PC-9 (cell line): ENCODE measurements at regions of chr16 and their contacts with region 1.

Region 1: GRCh38 chr16:2720719-2721633 is 952 bp upstream of the PRSS27 start:
- DNase-seq: peak; percentile 71 to 94
- H3K4me3 ChIP-seq: peak overlapping the region; percentile 64
- H3K27ac ChIP-seq: peak overlapping the region; percentile 72
- H3K4me1 ChIP-seq: peaks cover 34% of the 10 kb centered on the region
- H3K27me3 ChIP-seq: no peaks in the 10 kb centered on the region
- CTCF ChIP-seq: peak; percentile 34; the same call in 1 of the 2 replicates

Region 2: GRCh38 chr16:2673066-2673999 is 47.6 kb before region 1 on chr16:
- CTCF ChIA-PET with region 1: no interaction called
- POLR2A ChIA-PET with region 1: no interaction called
- intact Hi-C with region 1: loop called (anchors 2 kb)
- DNase-seq: peak; percentile 92 to 100
- H3K4me3 ChIP-seq: peak overlapping the region; percentile 72
- H3K27ac ChIP-seq: peak overlapping the region; percentile 46
- H3K4me1 ChIP-seq: peaks cover 19% of the 10 kb centered on the region
- H3K27me3 ChIP-seq: no peaks in the 10 kb centered on the region
- CTCF ChIP-seq: no peak

Region 3: GRCh38 chr16:2752035-2752849 is 31.3 kb after region 1 on chr16 and contains the start of gene SRRM2:
- CTCF ChIA-PET with region 1: no interaction called
- POLR2A ChIA-PET with region 1: no interaction called
- intact Hi-C with region 1: loop called (anchors 1 kb)
- DNase-seq: peak; percentile 86 to 95
- H3K4me3 ChIP-seq: peak within 1 kb of the TSS; percentile 90
- H3K27ac ChIP-seq: peak within 1 kb of the TSS; percentile 96
- H3K4me1 ChIP-seq: peaks cover 26% of the 10 kb centered on the region
- H3K27me3 ChIP-seq: no peaks in the 10 kb centered on the region
- CTCF ChIP-seq: no peak
- total RNA-seq, gene SRRM2: 679 and 746 TPM in 2 replicates

Region 4: DNA sequence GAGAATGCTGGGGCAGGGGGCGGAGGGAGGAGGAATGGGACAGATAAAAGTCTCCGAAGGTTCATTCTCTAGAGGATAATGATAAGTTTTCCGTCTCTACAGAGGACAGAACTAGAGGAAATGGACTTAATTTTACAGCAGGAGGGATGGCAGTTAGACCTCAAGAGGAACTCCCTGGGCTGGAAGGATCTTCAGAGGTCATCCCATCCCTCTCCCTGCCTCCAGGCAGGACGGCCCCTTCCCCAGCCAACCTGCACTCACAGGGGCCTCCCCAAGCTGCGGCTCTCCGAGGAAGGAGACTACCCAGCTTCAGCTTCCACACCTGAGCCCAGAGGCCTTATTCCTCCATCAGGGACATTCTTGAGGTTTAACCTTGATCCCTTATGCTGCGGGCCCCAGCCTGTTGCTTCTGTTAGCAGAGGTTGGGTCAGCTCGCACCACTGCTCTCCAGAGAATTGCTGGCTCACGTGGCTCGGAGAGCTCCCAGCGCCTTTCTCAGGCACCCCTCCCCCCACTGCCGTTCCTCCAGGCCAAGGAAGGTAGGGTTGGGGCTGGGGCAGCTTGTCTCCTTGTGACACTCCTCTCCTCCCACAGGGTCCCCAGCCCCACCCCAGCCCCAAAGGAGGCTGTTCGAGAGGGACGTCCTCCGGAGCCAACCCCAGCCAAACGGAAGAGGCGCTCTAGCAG is 47.6 kb after region 1 on chr16:
- CTCF ChIA-PET with region 1: no interaction called
- POLR2A ChIA-PET with region 1: no interaction called
- intact Hi-C with region 1: no loop called
- DNase-seq: no peak
- H3K4me3 ChIP-seq: no peak overlapping the region
- H3K27ac ChIP-seq: no peak overlapping the region
- H3K4me1 ChIP-seq: no peaks in the 10 kb centered on the region; the same call in 1 of the 2 replicates
- H3K27me3 ChIP-seq: no peaks in the 10 kb centered on the region
- CTCF ChIP-seq: no peak

Region 5: GRCh38 chr16:3106205-3106928 is 385.4 kb after region 1 on chr16:
- CTCF ChIA-PET with region 1: no interaction called
- POLR2A ChIA-PET with region 1: no interaction called
- intact Hi-C with region 1: loop called (anchors 5 kb)
- DNase-seq: peak; percentile 80 to 96
- H3K4me3 ChIP-seq: peak overlapping the region; percentile 97
- H3K27ac ChIP-seq: peak overlapping the region; percentile 59
- H3K4me1 ChIP-seq: peaks cover 6% of the 10 kb centered on the region
- H3K27me3 ChIP-seq: no peaks in the 10 kb centered on the region
- CTCF ChIP-seq: no peak